Mammary epithelial cell (primary cell): ENCODE measurements at regions of chr3 and their contacts with region 1.

Region 1: DNA sequence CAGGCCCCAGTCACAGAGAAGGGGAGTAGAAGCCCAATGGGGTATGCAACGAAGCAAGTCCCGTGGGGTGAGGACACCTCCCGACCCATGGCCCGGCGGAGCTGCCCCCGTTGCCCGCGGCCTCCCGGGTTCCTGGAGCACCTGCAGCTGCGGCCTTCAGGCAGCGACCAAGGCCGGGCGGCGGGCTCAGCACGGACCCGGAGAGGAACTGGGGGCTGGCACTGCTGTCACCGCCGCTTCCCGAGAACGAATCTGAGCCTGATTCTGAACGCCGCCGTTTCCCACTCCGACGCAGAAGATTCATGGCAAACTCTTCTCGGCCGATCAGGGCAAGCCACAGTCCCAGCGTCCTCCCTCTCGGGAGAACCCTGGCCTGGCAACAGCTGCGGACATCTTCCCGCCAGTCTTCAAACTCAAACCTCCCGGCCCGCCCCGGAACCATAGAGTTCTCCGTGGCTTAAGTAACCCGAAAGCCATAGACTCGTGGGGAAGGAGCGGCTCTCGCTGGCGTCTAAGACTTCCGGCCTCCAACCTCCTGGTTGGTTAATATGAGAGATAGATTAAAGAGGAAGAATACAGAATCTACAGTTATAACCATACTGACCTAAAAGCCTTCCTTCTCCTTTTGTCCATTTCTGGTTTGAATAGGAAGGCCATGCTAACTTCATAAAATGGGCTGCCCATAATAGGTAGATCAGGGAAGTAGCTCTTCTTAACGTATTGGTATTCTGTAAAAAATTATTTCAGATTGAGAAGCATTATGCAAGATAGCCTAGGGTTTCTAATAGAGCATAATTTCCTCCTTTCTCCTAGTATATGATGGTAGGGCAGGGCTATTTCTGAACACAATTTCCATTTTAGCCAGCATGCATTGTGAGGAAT is at the start of gene POLQ:
- DNase-seq: peak; percentile 93
- H3K4me3 ChIP-seq: peak within 1 kb of the TSS; percentile 69 to 86 (median 71)
- H3K27ac ChIP-seq: peak within 1 kb of the TSS; percentile 66
- H3K4me1 ChIP-seq: peaks cover 16% of the 10 kb centered on the region
- H3K27me3 ChIP-seq: no peaks in the 10 kb centered on the region
- CTCF ChIP-seq: no peak
- total RNA-seq, gene POLQ: 1.0 to 8.4 TPM

Region 2: DNA sequence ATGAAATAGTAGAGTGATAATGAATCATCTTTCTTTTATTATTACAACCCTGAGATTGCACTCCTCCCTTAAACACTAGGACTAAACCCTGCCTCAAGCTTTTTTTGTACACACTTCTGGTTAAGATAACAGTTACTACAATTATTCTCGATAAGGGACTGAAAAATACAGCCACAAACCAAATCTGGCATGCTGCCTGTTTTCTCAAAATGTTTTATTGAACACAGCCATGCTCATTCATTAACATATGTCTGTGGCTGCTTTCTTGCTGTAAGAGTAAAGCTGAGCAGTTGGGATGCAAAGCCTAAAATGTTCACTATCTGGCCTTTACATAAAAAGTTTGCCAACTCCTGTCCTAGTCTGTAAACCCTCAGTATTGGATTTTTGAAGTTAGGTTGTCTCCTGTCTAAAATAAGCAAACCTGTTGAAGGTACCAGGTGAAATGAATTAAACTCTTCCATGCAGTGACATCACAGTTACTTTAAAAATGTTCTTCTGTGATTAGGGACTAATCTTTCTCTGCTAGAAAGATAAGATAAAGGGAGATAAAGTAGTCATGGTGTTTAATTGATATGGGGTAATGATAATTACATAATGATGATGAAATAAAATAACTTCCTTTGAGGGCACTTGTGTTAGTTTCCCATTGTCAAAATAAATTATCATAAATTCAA is 419.6 kb before region 1 on chr3:
- CTCF ChIA-PET with region 1: no interaction called
- dilution Hi-C with region 1: no loop called
- in situ Hi-C with region 1: no loop called
- intact Hi-C with region 1: no loop called
- DNase-seq: no peak
- H3K4me3 ChIP-seq: no peak overlapping the region
- H3K27ac ChIP-seq: no peak overlapping the region
- H3K4me1 ChIP-seq: no peaks in the 10 kb centered on the region
- H3K27me3 ChIP-seq: no peaks in the 10 kb centered on the region
- CTCF ChIP-seq: no peak

Region 3: GRCh38 chr3:121749276-121750086 is 203.7 kb after region 1 on chr3 and contains the start of gene GOLGB1:
- CTCF ChIA-PET with region 1: no interaction called
- dilution Hi-C with region 1: no loop called
- in situ Hi-C with region 1: no loop called
- intact Hi-C with region 1: loop called (anchors 2 kb)
- DNase-seq: peak; percentile 100
- H3K4me3 ChIP-seq: peak within 1 kb of the TSS; percentile 71 to 95 (median 90)
- H3K27ac ChIP-seq: peak within 1 kb of the TSS; percentile 97
- H3K4me1 ChIP-seq: peaks cover 6% of the 10 kb centered on the region
- H3K27me3 ChIP-seq: no peaks in the 10 kb centered on the region
- CTCF ChIP-seq: peak in 1 of 2 donors; percentile 11
- total RNA-seq, gene GOLGB1: 44.2 to 51.0 TPM

Region 4: GRCh38 chr3:121979734-121980449 is 434.1 kb after region 1 on chr3:
- CTCF ChIA-PET with region 1: no interaction called
- dilution Hi-C with region 1: no loop called
- in situ Hi-C with region 1: no loop called
- intact Hi-C with region 1: loop called (anchors 5 kb)
- DNase-seq: peak; percentile 69
- H3K4me3 ChIP-seq: peak overlapping the region in 2 of 3 experiments; percentile 26
- H3K27ac ChIP-seq: peak overlapping the region; percentile 46
- H3K4me1 ChIP-seq: peaks cover 37% of the 10 kb centered on the region
- H3K27me3 ChIP-seq: no peaks in the 10 kb centered on the region
- CTCF ChIP-seq: no peak

Region 5: DNA sequence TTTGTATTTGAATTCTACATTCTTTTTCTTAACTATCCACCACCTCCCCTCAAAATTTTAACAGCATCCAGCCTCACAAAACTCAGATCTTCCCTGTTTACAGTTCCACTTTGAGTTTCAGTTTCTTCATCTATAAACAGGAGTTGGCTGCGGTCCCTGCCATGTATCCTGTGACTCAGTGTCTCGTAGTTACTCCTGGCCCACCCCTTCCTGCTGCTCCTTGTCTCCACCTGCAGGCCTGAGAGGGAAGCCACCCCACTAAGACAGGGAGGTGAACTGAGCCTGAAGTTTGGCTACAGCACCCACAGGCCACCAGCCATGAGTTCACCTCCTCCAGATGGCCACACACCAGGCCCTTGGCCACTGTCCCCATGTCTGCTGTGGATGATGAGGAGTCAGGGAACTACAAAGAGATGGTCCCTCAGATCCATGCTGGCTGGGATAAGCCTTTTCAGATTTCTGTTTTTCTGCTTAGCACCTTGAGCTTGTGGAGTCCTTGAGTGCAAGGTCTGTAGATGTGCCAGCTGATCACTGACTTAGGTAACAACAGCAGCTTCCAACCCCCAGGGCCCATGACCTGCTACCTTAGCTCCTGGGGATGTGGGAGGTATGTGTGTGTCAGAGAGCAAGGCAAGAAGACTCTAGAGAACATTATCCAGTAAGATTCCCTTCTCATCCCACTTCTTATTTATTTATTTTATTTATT is 546.8 kb after region 1 on chr3:
- CTCF ChIA-PET with region 1: no interaction called
- dilution Hi-C with region 1: no loop called
- in situ Hi-C with region 1: no loop called
- intact Hi-C with region 1: loop called (anchors 2 kb)
- DNase-seq: peak; percentile 37
- H3K4me3 ChIP-seq: no peak overlapping the region
- H3K27ac ChIP-seq: no peak overlapping the region
- H3K4me1 ChIP-seq: no peaks in the 10 kb centered on the region
- H3K27me3 ChIP-seq: no peaks in the 10 kb centered on the region
- CTCF ChIP-seq: peak; percentile 62 to 76

Region 6: DNA sequence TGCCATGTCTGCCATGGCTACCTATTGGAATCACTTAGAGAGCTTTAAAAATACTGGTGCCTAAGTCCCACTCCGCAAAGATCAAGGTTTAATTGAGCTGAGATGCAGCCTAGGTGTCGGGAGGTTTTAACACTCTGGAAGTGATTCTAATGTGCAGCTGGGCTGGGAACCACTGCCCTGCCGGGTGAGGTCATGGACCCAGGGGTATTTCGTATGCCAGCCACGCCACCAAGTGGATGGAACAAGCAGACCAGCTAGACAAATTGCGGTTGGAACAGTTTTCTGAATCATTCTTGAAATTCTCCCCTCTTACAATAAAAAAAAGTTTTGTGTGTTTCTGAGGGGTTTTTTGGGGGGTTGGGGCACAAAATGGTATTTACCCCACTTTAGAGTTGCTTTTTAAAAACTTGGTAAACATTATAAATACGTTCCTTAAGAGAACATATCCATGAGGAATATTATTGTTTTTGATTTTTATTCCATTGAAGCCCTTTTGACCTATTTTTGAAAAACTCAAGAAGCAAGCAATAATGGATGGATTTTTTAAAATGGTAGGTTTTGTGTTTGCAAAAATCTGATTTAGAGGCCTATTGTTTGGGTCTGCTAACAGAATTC is 713.0 kb after region 1 on chr3:
- CTCF ChIA-PET with region 1: no interaction called
- dilution Hi-C with region 1: no loop called
- in situ Hi-C with region 1: loop called in 1 of 2 experiments (anchors 25 kb)
- intact Hi-C with region 1: loop called (anchors 1 kb)
- DNase-seq: peak; percentile 58
- H3K4me3 ChIP-seq: no peak overlapping the region
- H3K27ac ChIP-seq: no peak overlapping the region
- H3K4me1 ChIP-seq: peaks cover 6% of the 10 kb centered on the region
- H3K27me3 ChIP-seq: no peaks in the 10 kb centered on the region
- CTCF ChIP-seq: peak; percentile 63 to 85

Region 7: GRCh38 chr3:122305818-122306621 is 760.2 kb after region 1 on chr3:
- CTCF ChIA-PET with region 1: interaction called, 27 read pairs
- dilution Hi-C with region 1: no loop called
- in situ Hi-C with region 1: no loop called
- intact Hi-C with region 1: no loop called
- DNase-seq: peak; percentile 56
- H3K4me3 ChIP-seq: no peak overlapping the region
- H3K27ac ChIP-seq: no peak overlapping the region
- H3K4me1 ChIP-seq: peaks cover 19% of the 10 kb centered on the region
- H3K27me3 ChIP-seq: no peaks in the 10 kb centered on the region
- CTCF ChIP-seq: peak; percentile 53 to 78

Region 8: DNA sequence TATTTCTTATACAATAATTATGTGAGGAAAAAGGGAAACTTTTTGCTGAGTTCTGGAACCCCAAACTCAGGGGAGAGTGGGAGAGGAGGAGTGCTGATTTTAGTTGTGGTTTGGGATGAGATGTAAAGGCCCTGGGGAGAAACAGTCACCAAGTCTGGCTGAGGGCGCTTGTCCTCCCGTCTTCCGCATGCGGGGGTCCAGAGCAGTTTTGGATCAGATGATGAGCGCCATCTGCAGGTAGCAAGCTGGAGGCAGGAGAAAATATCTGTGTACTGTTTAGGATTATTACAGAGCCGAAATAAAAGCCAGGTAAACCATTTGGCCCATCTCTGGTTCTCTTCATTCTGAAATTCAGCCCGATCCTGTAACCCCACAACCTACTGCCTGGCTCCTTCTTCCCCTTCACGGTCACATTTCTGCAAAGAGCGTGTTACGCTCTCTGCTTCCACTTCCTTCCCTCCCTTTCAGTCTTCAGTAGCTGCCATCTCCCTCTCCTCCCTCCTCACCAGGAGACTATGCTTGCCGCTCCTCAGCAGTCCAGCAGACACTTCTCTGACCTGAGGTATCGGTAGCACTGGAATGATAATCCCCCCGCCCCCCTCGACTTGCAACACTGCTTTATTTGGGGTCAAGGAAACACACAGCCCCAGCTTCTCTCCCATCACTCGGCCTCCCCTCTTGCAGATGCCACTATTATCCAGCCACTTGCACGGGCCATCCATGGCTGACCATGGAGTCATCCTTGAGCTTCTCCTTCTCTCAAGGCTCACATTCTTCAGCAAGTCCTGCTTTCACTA is 1133.5 kb after region 1 on chr3:
- CTCF ChIA-PET with region 1: interaction called, 11 read pairs
- dilution Hi-C with region 1: no loop called
- in situ Hi-C with region 1: no loop called
- intact Hi-C with region 1: no loop called
- DNase-seq: peak; percentile 63
- H3K4me3 ChIP-seq: peak overlapping the region; percentile 20 to 83 (median 25)
- H3K27ac ChIP-seq: peak overlapping the region; percentile 44
- H3K4me1 ChIP-seq: peaks cover 26% of the 10 kb centered on the region
- H3K27me3 ChIP-seq: no peaks in the 10 kb centered on the region
- CTCF ChIP-seq: peak; percentile 66 to 82